Activated B cell treated with CpG ODN at 0.5 μM for 24 hours (primary cell): ENCODE measurements at regions of chr19 and their contacts with region 1.

Region 1: GRCh38 chr19:23758187-23759074 is at the start of gene ZNF681:
- DNase-seq: peak; percentile 66
- ATAC-seq: peak; percentile 86
- H3K4me3 Mint-ChIP-seq: peak within 1 kb of the TSS; percentile 98
- H3K27ac Mint-ChIP-seq: peak within 1 kb of the TSS; percentile 93
- H3K4me1 Mint-ChIP-seq: peaks cover 19% of the 10 kb centered on the region
- H3K27me3 Mint-ChIP-seq: no peaks in the 10 kb centered on the region
- CTCF ChIP-seq: no peak
- total RNA-seq, gene ZNF681: 5.5 and 8.3 TPM in 2 replicates

Region 2: DNA sequence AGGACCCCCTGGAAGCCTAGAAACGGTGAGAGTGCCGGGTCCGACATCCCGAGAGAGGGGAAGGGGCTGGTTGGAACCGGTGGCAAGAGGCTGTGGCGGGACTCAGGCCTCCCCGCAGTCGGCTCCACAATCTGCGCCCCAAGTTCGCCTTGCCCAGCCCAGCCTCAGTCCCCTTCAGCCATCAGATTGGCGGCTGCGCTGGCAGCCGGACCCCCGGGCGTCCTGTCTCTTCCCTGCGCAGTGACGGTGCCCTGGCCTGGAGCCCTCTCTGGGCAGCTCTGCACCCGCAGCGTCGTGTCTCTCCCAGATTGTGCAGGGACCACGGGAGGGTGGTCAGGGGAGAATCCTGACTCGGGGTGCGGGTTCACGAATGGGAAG is 1124.0 kb before region 1 on chr19:
- CTCF ChIA-PET with region 1: no interaction called
- POLR2A ChIA-PET with region 1: no interaction called
- intact Hi-C with region 1: loop called (anchors 2 kb)
- DNase-seq: no peak
- ATAC-seq: peak; percentile 12
- H3K4me3 Mint-ChIP-seq: peak overlapping the region; percentile 93
- H3K27ac Mint-ChIP-seq: peak overlapping the region; percentile 70
- H3K4me1 Mint-ChIP-seq: peaks cover 9% of the 10 kb centered on the region
- H3K27me3 Mint-ChIP-seq: no peaks in the 10 kb centered on the region
- CTCF ChIP-seq: no peak

Region 3: GRCh38 chr19:23241419-23241818 is 517.0 kb before region 1 on chr19:
- CTCF ChIA-PET with region 1: no interaction called
- POLR2A ChIA-PET with region 1: interaction called, 10 read pairs
- intact Hi-C with region 1: no loop called
- DNase-seq: no peak
- ATAC-seq: no peak
- H3K4me3 Mint-ChIP-seq: no peak overlapping the region
- H3K27ac Mint-ChIP-seq: no peak overlapping the region
- H3K4me1 Mint-ChIP-seq: no peaks in the 10 kb centered on the region
- H3K27me3 Mint-ChIP-seq: no peaks in the 10 kb centered on the region
- CTCF ChIP-seq: no peak

Region 4: GRCh38 chr19:23273590-23274413 is 484.6 kb before region 1 on chr19:
- CTCF ChIA-PET with region 1: no interaction called
- POLR2A ChIA-PET with region 1: interaction called, 10 read pairs
- intact Hi-C with region 1: loop called (anchors 5 kb)
- DNase-seq: peak; percentile 89
- ATAC-seq: peak; percentile 98
- H3K4me3 Mint-ChIP-seq: peak overlapping the region; percentile 97
- H3K27ac Mint-ChIP-seq: peak overlapping the region; percentile 90
- H3K4me1 Mint-ChIP-seq: peaks cover 30% of the 10 kb centered on the region
- H3K27me3 Mint-ChIP-seq: no peaks in the 10 kb centered on the region
- CTCF ChIP-seq: no peak

Region 5: GRCh38 chr19:23539499-23539898 is 218.9 kb before region 1 on chr19:
- CTCF ChIA-PET with region 1: no interaction called
- POLR2A ChIA-PET with region 1: no interaction called
- intact Hi-C with region 1: no loop called
- DNase-seq: no peak
- ATAC-seq: no peak
- H3K4me3 Mint-ChIP-seq: no peak overlapping the region
- H3K27ac Mint-ChIP-seq: no peak overlapping the region
- H3K4me1 Mint-ChIP-seq: no peaks in the 10 kb centered on the region
- H3K27me3 Mint-ChIP-seq: no peaks in the 10 kb centered on the region
- CTCF ChIP-seq: no peak

Region 6: DNA sequence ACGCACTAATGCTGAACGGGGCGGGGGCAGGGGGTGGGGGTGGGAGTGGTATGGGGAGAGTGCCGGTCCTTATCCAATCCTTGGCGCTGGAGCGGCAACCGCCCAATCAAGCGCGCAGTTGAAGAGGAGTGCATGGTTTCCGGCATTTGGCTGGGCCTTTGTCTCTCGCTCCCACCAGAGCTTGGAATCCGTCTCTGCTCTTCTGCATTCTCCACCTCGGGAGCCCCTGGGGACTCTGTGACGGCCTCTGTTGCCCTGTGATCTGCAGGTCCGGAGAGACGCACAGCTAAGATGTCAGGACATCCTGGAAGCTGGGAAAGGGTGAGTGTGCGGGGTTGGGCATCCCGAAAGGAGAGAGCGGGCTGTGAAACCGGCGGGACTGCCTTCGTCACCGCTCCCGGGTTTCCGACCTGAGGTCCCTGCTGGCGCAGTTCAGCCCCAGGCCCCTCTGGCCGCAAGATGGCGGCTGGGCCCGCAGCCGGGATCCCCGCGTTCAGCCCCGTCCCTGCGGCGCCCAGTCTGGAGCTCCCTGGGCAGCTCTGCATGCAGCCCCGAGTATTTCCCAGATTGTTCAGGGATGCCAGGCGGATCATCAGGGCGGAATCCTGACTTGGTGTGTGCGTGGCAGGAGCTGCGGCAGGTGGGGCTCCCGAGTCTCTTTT is 275.0 kb after region 1 on chr19:
- CTCF ChIA-PET with region 1: no interaction called
- POLR2A ChIA-PET with region 1: interaction called, 3 read pairs
- intact Hi-C with region 1: loop called (anchors 1 kb)
- DNase-seq: peak; percentile 63
- ATAC-seq: peak; percentile 97
- H3K4me3 Mint-ChIP-seq: peak overlapping the region; percentile 100
- H3K27ac Mint-ChIP-seq: peak overlapping the region; percentile 97
- H3K4me1 Mint-ChIP-seq: peaks cover 42% of the 10 kb centered on the region
- H3K27me3 Mint-ChIP-seq: no peaks in the 10 kb centered on the region
- CTCF ChIP-seq: no peak